Activated CD4-positive, alpha-beta T cell treated with anti-CD3 and anti-CD28 coated beads for 36 hours (primary cell): ENCODE measurements at regions of chr19 and their contacts with region 1.

Region 1: GRCh38 chr19:12796146-12797071 is 5.1 kb downstream of the JUNB start:
- DNase-seq: peak; percentile 87
- ATAC-seq: peak; percentile 14
- H3K4me3 Mint-ChIP-seq: peak overlapping the region; percentile 63
- H3K27ac Mint-ChIP-seq: peak overlapping the region; percentile 84
- H3K4me1 Mint-ChIP-seq: peaks cover 35% of the 10 kb centered on the region
- H3K27me3 Mint-ChIP-seq: no peaks in the 10 kb centered on the region

Region 2: DNA sequence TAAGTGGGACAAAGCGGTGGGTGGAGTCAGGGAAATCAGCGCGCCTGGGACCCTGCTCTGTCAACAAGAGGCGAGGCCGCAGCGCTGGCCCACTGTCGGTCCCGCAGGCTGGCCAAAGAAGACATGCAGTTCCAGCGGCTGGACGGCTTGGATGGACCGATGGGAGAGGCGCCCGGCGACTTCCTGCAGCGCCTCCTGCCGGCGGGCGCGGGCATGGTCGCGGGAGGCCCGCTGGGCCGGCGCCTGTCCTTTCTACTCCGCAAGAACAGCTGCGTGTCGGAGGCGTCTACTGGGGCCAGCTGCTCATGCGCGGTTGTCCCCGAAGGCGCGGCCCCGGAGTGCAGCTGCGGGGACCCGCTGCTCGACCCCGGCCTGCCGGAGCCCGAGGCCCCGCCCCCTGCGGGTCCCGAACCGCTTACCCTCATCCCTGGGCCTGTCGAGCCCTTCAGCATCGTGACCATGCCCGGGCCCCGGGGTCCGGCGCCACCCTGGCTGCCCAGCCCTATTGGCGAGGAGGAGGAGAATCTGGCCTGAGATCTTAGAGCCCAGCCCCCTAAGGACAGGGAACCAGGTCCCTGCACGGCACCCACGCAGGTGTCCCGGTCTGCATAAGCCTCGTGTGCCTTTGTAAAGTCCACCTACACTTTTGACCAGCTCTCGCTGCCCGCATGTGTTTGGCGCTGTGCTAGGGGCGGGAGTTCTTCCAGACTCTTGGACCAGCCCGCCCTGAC is 38.7 kb before region 1 on chr19:
- CTCF ChIA-PET with region 1: interaction called, 451 read pairs
- POLR2A ChIA-PET with region 1: interaction called, 8 read pairs
- intact Hi-C with region 1: loop called (anchors 1 kb)
- DNase-seq: peak; percentile 83
- ATAC-seq: peak; percentile 84
- H3K4me3 Mint-ChIP-seq: peak overlapping the region; percentile 19
- H3K27ac Mint-ChIP-seq: no peak overlapping the region
- H3K4me1 Mint-ChIP-seq: peaks cover 6% of the 10 kb centered on the region
- H3K27me3 Mint-ChIP-seq: peaks cover 20% of the 10 kb centered on the region

Region 3: GRCh38 chr19:12766051-12766521 is 30.3 kb before region 1 on chr19:
- CTCF ChIA-PET with region 1: interaction called, 451 read pairs
- POLR2A ChIA-PET with region 1: interaction called, 12 read pairs
- intact Hi-C with region 1: loop called (anchors 1 kb)
- DNase-seq: peak; percentile 94
- ATAC-seq: peak; percentile 83
- H3K4me3 Mint-ChIP-seq: peak overlapping the region; percentile 17
- H3K27ac Mint-ChIP-seq: no peak overlapping the region
- H3K4me1 Mint-ChIP-seq: peaks cover 10% of the 10 kb centered on the region
- H3K27me3 Mint-ChIP-seq: no peaks in the 10 kb centered on the region

Region 4: GRCh38 chr19:12806239-12807081 is 10.1 kb after region 1 on chr19 and contains the start of gene RNASEH2A:
- CTCF ChIA-PET with region 1: interaction called, 17 read pairs
- POLR2A ChIA-PET with region 1: interaction called, 9 read pairs
- intact Hi-C with region 1: loop called in 1 of 2 experiments (anchors 1 kb)
- DNase-seq: peak; percentile 94
- ATAC-seq: peak; percentile 93
- H3K4me3 Mint-ChIP-seq: peak within 1 kb of the TSS; percentile 89
- H3K27ac Mint-ChIP-seq: peak within 1 kb of the TSS; percentile 80
- H3K4me1 Mint-ChIP-seq: peaks cover 24% of the 10 kb centered on the region
- H3K27me3 Mint-ChIP-seq: no peaks in the 10 kb centered on the region
- total RNA-seq, gene RNASEH2A: 27.0 to 51.1 TPM